ENCODE measurements at regions of chr18 and their contacts with region 1.

Region 1: DNA sequence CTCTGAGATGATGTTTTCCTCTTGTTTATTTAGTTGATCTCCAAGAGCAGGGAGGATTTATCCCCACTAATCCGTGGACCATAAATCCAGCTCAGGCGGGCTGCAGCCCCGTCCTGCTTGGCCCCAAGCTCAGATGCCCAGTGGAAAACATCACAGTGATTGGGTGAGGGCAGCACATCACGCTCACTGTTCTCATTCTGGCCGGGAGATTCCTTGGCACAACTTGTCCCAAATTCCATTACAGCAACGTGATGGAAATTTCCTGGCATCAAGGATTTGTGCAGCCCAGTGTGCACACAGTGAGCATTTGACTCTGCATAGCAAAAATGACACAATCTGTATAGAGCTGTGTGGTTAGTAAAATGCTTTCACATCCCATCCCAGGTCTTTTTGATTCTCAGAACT is 96.8 kb downstream of the VAPA start:
- DNase-seq: peak; percentile 93
- H3K4me3 ChIP-seq: no peak overlapping the region
- H3K27ac ChIP-seq: peak overlapping the region; percentile 77 to 80 (median 77)
- H3K4me1 ChIP-seq: peaks cover 0 to 43% (median 39%) of the 10 kb centered on the region in 4 donors
- H3K27me3 ChIP-seq: no peaks in the 10 kb centered on the region
- CTCF ChIP-seq: no peak
- EP300 ChIP-seq: peak; percentile 44 to 96 (median 92)
- POLR2A ChIP-seq: no peak

Region 2: DNA sequence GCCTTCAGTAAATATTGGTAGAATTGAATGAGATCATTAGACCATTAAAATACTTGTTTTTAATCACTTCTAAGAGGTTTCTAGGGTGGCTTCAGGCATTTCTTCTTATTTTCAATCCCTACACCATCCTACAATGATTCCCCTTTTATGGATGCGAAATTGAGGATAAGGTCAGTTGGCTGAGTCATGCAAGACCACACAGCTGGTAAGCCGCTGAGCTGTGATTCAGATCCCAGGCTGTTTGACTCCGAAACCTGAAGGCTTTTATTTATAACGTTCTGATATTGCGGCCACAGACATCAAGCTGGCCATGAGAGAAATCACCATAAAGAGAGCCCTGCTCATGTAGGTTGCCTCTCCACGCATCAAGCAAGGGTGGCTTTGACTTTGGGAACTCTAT is 36.6 kb after region 1 on chr18:
- intact Hi-C with region 1: loop called (anchors 5 kb)
- DNase-seq: no peak
- H3K4me3 ChIP-seq: no peak overlapping the region
- H3K27ac ChIP-seq: peak overlapping the region in 1 of 4 donors; percentile 58
- H3K4me1 ChIP-seq: peaks cover 0 to 60% (median 23%) of the 10 kb centered on the region in 4 donors
- H3K27me3 ChIP-seq: no peaks in the 10 kb centered on the region
- CTCF ChIP-seq: no peak
- EP300 ChIP-seq: no peak
- POLR2A ChIP-seq: no peak

Region 3: GRCh38 chr18:10182009-10182624 is 171.5 kb after region 1 on chr18:
- intact Hi-C with region 1: no loop called
- DNase-seq: no peak
- H3K4me3 ChIP-seq: no peak overlapping the region
- H3K27ac ChIP-seq: no peak overlapping the region
- H3K4me1 ChIP-seq: no peaks in the 10 kb centered on the region
- H3K27me3 ChIP-seq: no peaks in the 10 kb centered on the region
- CTCF ChIP-seq: no peak
- EP300 ChIP-seq: no peak
- POLR2A ChIP-seq: no peak

Region 4: DNA sequence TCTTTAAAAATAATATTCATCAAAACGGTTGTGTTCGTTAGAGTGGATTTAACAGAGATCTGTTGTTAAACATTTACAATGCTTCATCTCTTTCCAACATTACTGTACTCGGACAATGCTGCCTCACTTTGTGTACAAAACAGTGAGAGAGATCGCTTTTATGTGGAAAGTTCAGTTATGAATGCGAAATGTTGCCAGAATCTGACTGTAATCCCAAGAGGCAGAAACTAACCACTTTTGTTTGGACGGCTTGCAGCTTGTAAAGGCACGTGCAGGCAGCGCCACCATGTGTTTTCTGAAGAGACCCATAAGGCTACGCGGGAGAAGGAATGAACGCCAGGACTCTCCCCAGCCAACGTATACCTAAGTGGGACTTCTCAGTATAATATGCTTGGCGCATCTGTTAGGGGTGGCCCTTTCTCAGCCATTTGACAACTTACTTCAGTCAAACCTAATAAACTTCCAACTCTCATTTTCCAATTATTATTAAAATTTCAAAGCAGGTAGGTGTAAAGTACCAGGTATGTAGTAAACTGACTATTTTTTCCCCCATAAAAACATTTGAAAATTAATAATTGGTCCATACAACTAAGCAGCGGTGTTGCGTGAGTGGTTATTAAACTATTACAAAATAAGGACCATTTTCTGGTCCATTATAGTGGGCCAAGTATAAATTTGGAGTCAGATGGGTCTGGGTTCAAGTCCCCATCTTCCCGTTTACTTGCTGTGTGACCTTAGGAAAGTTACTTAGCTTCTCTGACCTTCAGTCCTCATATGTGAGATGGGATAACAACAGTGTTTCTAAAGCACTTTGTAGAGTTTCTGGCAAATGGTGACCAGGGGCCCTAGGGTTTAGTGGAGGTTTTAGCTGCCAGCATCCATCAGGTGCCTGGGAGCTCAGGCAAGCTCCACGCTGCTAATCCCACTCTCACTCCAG is 509.7 kb after region 1 on chr18:
- intact Hi-C with region 1: loop called (anchors 2 kb)
- DNase-seq: peak; percentile 95
- H3K4me3 ChIP-seq: peak overlapping the region in 1 of 4 donors; percentile 1
- H3K27ac ChIP-seq: peak overlapping the region; percentile 49 to 60 (median 54)
- H3K4me1 ChIP-seq: peaks cover 0 to 40% (median 21%) of the 10 kb centered on the region in 4 donors
- H3K27me3 ChIP-seq: no peaks in the 10 kb centered on the region
- CTCF ChIP-seq: peak; percentile 71 to 89 (median 73)
- EP300 ChIP-seq: no peak
- POLR2A ChIP-seq: no peak